HEK293T (cell line): ENCODE measurements at regions of chr4 and their contacts with region 1.

Region 1: DNA sequence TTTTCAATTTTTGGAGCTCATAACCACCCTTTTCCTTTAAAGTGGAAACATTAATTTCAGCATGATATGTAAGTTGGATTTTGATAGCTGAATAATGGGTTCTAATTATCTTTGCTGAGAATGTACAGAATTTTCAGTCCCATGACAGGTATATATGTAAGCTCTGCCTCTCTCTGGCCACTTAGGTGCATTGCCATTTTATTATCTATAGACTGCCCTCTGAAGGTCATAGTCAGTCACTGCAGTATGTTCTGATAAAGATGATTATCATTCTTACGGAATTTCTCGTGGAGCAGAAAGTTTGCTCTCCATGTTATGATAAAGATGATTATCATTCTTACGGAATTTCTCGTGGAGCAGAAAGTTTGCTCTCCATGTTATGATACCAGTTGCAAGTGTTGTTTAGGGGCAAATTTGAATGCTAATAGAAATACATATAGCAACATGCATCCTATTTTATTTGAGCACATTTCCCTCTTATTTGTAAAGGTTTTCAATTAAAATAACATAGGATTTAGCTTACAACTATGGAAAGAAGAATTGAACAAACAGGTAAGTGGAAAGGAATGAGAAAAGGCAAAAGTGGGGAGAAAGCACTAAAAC is 10.4 kb downstream of the AFP start:
- DNase-seq: peak; percentile 49

Region 2: GRCh38 chr4:73341454-73341853 is 105.0 kb before region 1 on chr4:
- CTCF ChIA-PET with region 1: interaction called, 16 read pairs
- POLR2A ChIA-PET with region 1: no interaction called
- DNase-seq: peak; percentile 49

Region 3: DNA sequence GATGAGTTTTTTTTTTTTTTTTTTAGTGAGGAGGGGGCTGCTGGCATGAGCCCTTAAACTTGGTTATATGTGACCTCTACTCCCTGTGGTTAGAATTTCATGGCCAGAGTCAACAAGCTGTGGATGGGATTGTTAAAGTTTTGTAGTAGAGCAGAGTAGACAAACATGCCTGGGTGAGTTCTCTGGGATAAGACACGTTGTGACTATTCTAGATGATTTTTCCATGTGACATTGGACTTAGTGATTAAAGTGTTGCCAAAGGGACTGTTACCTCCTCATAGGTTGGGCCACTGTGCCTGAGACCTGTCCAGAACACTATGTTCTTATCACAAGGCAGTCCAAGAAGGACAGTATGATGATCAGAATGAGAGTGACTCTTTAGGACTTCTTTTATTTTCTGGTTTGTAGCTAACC is 71.1 kb before region 1 on chr4:
- CTCF ChIA-PET with region 1: no interaction called
- POLR2A ChIA-PET with region 1: no interaction called
- DNase-seq: no peak